IMR-90 (cell line): ENCODE measurements at regions of chr4 and their contacts with region 1.

Region 1: GRCh38 chr4:81030061-81030980 is at the start of gene BMP3:
- DNase-seq: peak; percentile 18
- ATAC-seq: peak; percentile 69
- H3K4me3 ChIP-seq: peak within 1 kb of the TSS; percentile 38
- H3K27ac ChIP-seq: no peak within 1 kb of the TSS
- H3K4me1 ChIP-seq: no peaks in the 10 kb centered on the region; the same call in 1 of the 2 replicates
- H3K27me3 ChIP-seq: peaks cover 65% of the 10 kb centered on the region
- CTCF ChIP-seq: no peak
- POLR2A ChIP-seq: no peak
- RAD21 ChIP-seq: no peak
- total RNA-seq, gene BMP3: under 0.01 TPM in 2 replicates

Region 2: DNA sequence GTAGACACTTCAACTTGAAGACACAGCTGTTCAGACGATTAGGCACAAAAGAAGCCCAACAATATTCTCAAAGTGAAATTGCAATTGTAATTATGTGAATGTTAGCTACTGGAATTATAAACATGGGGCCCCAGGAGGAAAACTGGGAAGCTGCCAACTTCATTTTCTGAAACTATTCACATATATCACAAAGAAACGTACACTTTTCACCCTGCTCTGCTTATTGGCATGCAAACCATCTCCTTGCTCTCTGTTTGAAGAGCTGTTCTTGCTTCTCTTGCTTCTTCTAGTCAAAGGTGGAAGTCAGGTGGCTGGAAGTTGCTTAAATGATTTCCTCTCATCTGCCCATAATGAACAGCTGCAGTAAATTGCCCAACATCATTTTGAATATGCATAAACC is 374.7 kb before region 1 on chr4:
- CTCF ChIA-PET with region 1: no interaction called
- POLR2A ChIA-PET with region 1: interaction called, 11 read pairs
- dilution Hi-C with region 1: no loop called
- in situ Hi-C with region 1: no loop called
- intact Hi-C with region 1: no loop called
- DNase-seq: peak; percentile 16
- ATAC-seq: no peak
- H3K4me3 ChIP-seq: no peak overlapping the region
- H3K27ac ChIP-seq: no peak overlapping the region
- H3K4me1 ChIP-seq: no peaks in the 10 kb centered on the region
- H3K27me3 ChIP-seq: no peaks in the 10 kb centered on the region
- CTCF ChIP-seq: no peak
- POLR2A ChIP-seq: no peak
- RAD21 ChIP-seq: no peak

Region 3: DNA sequence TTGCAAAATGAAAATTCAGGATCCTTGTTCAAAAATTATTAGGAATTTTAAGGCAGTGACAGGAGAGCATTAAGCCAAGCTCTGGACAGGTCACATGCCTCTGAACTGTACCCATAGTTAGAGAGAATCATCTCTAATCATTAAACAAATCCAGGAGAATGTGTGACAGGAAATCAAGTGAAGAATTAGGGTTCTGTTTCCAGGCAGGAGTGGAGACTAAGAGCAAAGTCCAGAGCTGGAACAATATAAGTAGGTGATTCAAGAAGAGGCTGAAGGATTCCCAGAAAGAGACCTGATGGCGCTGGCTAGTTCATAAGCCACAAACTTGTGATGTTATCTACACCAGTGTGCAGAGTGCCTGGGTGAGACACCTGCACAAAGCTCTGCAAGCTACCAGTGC is 289.3 kb after region 1 on chr4:
- CTCF ChIA-PET with region 1: no interaction called
- POLR2A ChIA-PET with region 1: interaction called, 19 read pairs
- dilution Hi-C with region 1: no loop called
- in situ Hi-C with region 1: no loop called
- intact Hi-C with region 1: no loop called
- DNase-seq: no peak
- ATAC-seq: no peak
- H3K4me3 ChIP-seq: no peak overlapping the region
- H3K27ac ChIP-seq: no peak overlapping the region
- H3K4me1 ChIP-seq: peaks cover 2% of the 10 kb centered on the region; the same call in 1 of the 2 replicates
- H3K27me3 ChIP-seq: no peaks in the 10 kb centered on the region
- CTCF ChIP-seq: no peak
- POLR2A ChIP-seq: no peak
- RAD21 ChIP-seq: no peak